HepG2 (cell line): ENCODE measurements at regions of chr14 and their contacts with region 1.

Region 1: DNA sequence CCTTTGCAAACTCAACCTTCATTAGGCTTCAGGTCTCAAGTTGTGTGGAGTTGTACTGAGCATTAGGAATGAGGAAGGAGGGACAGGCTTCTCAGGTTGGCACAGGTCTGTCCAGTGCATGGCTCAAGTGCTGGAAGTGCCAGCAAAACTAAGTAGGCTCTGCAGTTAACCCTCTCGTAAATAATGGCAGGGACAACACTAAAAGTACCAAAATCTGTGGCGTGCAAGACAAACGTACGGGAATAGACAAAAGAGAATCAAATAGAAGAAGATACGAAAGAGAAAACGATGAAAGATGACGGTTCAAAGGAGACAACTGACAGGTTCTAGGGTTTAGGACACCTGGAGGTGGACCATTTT is 612 bp downstream of the TRAPPC6B start:
- DNase-seq: no peak
- ATAC-seq: peak; percentile 44
- H3K4me3 ChIP-seq: peak overlapping the region; percentile 71 to 96 (median 90)
- H3K27ac ChIP-seq: peak overlapping the region; percentile 86
- H3K4me1 ChIP-seq: peaks cover 63% of the 10 kb centered on the region
- H3K27me3 ChIP-seq: peaks cover 0 to 7% of the 10 kb centered on the region in 2 experiments; a peak in 1 of 5 replicates
- CTCF ChIP-seq: no peak
- EP300 ChIP-seq: no peak
- POLR2A ChIP-seq: no peak
- RAD21 ChIP-seq: no peak

Region 2: GRCh38 chr14:39114073-39114838 is 55.3 kb before region 1 on chr14 and contains the start of gene GEMIN2:
- CTCF ChIA-PET with region 1: no interaction called
- POLR2A ChIA-PET with region 1: interaction called, 91 read pairs
- in situ Hi-C with region 1: loop called (anchors 5 kb)
- intact Hi-C with region 1: no loop called
- DNase-seq: peak; percentile 97
- ATAC-seq: peak; percentile 99
- H3K4me3 ChIP-seq: peak within 1 kb of the TSS; percentile 71 to 90 (median 76)
- H3K27ac ChIP-seq: peak within 1 kb of the TSS; percentile 40
- H3K4me1 ChIP-seq: peaks cover 33% of the 10 kb centered on the region
- H3K27me3 ChIP-seq: no peaks in the 10 kb centered on the region; a peak in 1 of 5 replicates
- CTCF ChIP-seq: peak; percentile 26
- EP300 ChIP-seq: peak in 1 of 2 experiments; percentile 13; a peak in 2 of 4 replicates
- POLR2A ChIP-seq: peak; percentile 89 to 99; a peak in 3 of 4 replicates
- RAD21 ChIP-seq: peak; percentile 29; the same call in 1 of the 2 replicates
- total RNA-seq, gene GEMIN2: 110 and 160 TPM in 2 replicates

Region 3: DNA sequence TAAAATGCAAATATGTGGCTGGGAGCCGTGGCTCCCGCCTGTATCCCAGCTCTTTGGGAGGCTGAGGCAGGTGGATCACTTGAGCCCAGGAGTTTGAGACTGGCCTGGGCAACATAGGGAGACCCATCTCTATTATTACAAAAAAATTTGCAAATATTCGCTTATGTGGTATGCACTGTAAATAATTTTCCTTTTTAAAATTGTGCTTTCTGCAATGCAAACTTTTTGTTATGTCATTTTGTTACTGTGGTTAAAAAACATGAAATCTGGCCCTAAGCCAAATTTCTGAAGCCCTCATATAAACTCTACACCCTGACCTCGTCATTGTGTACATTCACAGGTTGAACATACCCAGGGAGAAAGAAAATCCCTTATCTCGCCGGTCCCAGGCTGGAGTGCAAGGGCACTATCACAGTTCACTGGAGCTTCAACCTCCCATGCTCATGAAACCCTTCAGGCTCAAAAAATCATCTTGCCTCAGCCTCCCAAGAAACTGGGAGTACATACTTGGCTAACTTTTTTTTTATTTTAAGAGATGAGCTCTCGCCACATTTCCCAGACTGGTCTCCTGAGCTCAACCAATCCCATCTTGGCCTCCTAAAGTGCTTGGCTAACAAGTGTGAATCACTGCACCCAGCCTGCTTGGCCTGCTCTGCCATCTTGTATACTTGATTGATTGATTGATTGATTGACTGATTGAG is 24.1 kb before region 1 on chr14:
- CTCF ChIA-PET with region 1: no interaction called
- POLR2A ChIA-PET with region 1: interaction called, 33 read pairs
- in situ Hi-C with region 1: no loop called
- intact Hi-C with region 1: loop called (anchors 1 kb)
- DNase-seq: peak; percentile 93
- ATAC-seq: peak; percentile 99
- H3K4me3 ChIP-seq: no peak overlapping the region
- H3K27ac ChIP-seq: peak overlapping the region; percentile 47
- H3K4me1 ChIP-seq: peaks cover 13% of the 10 kb centered on the region
- H3K27me3 ChIP-seq: no peaks in the 10 kb centered on the region
- CTCF ChIP-seq: no peak
- EP300 ChIP-seq: peak in 1 of 2 experiments; percentile 63; a peak in 3 of 4 replicates
- POLR2A ChIP-seq: 0 out of 4 replicates have a peak, but pooled peaks of 1 of the 2 experiments have one; percentile 3
- RAD21 ChIP-seq: peak; percentile 39; the same call in 1 of the 2 replicates

Region 4: DNA sequence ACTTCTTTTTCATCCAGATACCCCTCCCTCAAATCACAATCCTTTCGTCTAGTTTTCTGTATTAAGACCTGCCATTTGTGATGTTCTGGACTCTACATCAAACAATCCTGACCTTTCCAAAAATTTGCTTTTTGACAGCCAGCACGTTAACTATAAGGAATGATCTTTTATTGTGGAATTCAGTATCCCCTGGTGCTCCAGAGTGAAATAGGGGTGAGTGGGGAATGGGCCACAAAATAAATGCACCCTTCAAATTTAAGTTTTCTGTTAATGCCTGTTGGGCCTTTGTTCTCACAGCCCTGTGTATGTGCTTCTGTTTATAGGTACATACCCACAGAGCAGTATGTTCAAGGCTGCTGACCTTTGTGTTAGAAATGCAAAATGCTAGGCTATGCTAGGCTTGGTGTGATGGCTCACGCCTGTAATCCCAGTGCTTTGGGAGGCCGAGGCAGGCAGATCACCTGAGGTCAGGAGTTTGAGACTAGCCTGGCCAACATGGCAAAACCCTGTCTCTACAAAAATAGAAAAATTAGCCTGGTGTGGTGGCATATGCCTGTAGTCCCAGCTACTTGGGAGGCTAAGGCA is 17.5 kb after region 1 on chr14:
- CTCF ChIA-PET with region 1: no interaction called
- POLR2A ChIA-PET with region 1: interaction called, 99 read pairs
- in situ Hi-C with region 1: no loop called
- intact Hi-C with region 1: no loop called
- DNase-seq: no peak
- ATAC-seq: peak; percentile 58
- H3K4me3 ChIP-seq: no peak overlapping the region
- H3K27ac ChIP-seq: peak overlapping the region; percentile 3
- H3K4me1 ChIP-seq: peaks cover 12% of the 10 kb centered on the region
- H3K27me3 ChIP-seq: no peaks in the 10 kb centered on the region
- CTCF ChIP-seq: no peak
- EP300 ChIP-seq: no peak
- POLR2A ChIP-seq: no peak; a peak in 1 of 4 replicates
- RAD21 ChIP-seq: no peak

Region 5: GRCh38 chr14:39232554-39233415 is 63.3 kb after region 1 on chr14:
- CTCF ChIA-PET with region 1: no interaction called
- POLR2A ChIA-PET with region 1: interaction called, 79 read pairs
- in situ Hi-C with region 1: no loop called
- intact Hi-C with region 1: loop called (anchors 2 kb)
- DNase-seq: peak; percentile 90
- ATAC-seq: peak; percentile 84
- H3K4me3 ChIP-seq: peak overlapping the region; percentile 65 to 72 (median 65)
- H3K27ac ChIP-seq: peak overlapping the region; percentile 69
- H3K4me1 ChIP-seq: peaks cover 49% of the 10 kb centered on the region
- H3K27me3 ChIP-seq: no peaks in the 10 kb centered on the region; a peak in 1 of 5 replicates
- CTCF ChIP-seq: peak; percentile 4; the same call in 1 of the 2 replicates
- EP300 ChIP-seq: peak in 1 of 2 experiments; percentile 75; a peak in 3 of 4 replicates
- POLR2A ChIP-seq: no peak
- RAD21 ChIP-seq: peak; percentile 44